ENCODE measurements at regions of chr6 and their contacts with region 1.

Region 1: GRCh38 chr6:150091476-150091875 is 22.6 kb upstream of the ULBP3 start:
- DNase-seq: no peak
- H3K4me3 ChIP-seq: no peak overlapping the region
- H3K27ac ChIP-seq: no peak overlapping the region
- H3K4me1 ChIP-seq: no peaks in the 10 kb centered on the region
- H3K27me3 ChIP-seq: no peaks in the 10 kb centered on the region
- CTCF ChIP-seq: no peak

Region 2: DNA sequence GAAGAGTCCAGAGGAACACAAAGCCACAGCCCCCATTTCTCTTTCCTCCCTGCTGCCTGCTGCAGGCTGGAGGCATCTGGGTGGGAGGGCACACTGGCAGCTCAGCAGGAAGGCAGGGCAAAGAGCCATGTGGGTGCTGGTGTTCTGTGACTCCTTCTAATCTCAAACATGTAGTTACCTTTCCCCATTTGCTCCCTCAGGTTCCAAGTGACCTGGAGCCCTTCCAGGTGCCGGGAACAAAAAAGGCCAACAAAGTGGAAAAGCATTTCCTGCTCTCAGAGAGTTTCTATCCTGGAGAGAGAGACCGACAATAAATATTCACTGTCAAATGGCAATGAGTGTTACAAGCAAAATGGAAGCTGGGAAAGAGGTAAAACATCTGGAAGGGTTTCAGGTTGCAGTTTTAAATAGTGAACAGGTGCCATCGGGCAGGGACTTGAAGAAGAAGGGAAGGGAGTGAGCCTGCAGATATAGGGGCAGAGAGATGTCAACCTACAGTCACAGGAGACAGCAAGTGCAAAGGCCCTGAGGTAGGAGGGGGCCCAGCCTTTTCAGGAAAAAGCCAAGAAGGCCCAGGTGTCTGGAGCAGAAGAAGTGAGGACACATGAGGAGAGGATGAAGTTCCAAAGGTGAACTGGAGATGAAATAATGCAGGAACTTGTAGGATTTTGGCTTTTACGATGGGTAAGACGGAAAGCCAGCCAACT is 233.7 kb after region 1 on chr6:
- CTCF ChIA-PET with region 1: no interaction called
- POLR2A ChIA-PET with region 1: interaction called, 10 read pairs
- intact Hi-C with region 1: no loop called
- DNase-seq: peak; percentile 27 to 56
- H3K4me3 ChIP-seq: no peak overlapping the region
- H3K27ac ChIP-seq: peak overlapping the region; percentile 18; the same call in 1 of the 2 replicates
- H3K4me1 ChIP-seq: peaks cover 13% of the 10 kb centered on the region; the same call in 1 of the 2 replicates
- H3K27me3 ChIP-seq: no peaks in the 10 kb centered on the region
- CTCF ChIP-seq: no peak

Measured in PC-9 (cell line).